CD8-positive, alpha-beta T cell (primary cell): ENCODE measurements at regions of chr3 and their contacts with region 1.

Region 1: GRCh38 chr3:83835037-83835436 is 1123.8 kb upstream of the CADM2 start:
- DNase-seq: no peak
- ATAC-seq: no peak
- H3K4me3 ChIP-seq: no peak overlapping the region
- H3K4me3 Mint-ChIP-seq: no peak overlapping the region
- H3K27ac ChIP-seq: no peak overlapping the region
- H3K27ac Mint-ChIP-seq: no peak overlapping the region
- H3K4me1 ChIP-seq: no peaks in the 10 kb centered on the region
- H3K4me1 Mint-ChIP-seq: no peaks in the 10 kb centered on the region
- H3K27me3 ChIP-seq: no peaks in the 10 kb centered on the region
- H3K27me3 Mint-ChIP-seq: no peaks in the 10 kb centered on the region
- CTCF ChIP-seq: no peak

Region 2: GRCh38 chr3:83076041-83076440 is 759.0 kb before region 1 on chr3:
- CTCF ChIA-PET with region 1: no interaction called
- POLR2A ChIA-PET with region 1: no interaction called
- intact Hi-C with region 1: loop called in 1 of 2 experiments (anchors 5 kb)
- DNase-seq: no peak
- ATAC-seq: no peak
- H3K4me3 ChIP-seq: no peak overlapping the region
- H3K4me3 Mint-ChIP-seq: no peak overlapping the region
- H3K27ac ChIP-seq: no peak overlapping the region
- H3K27ac Mint-ChIP-seq: no peak overlapping the region
- H3K4me1 ChIP-seq: no peaks in the 10 kb centered on the region
- H3K4me1 Mint-ChIP-seq: no peaks in the 10 kb centered on the region
- H3K27me3 ChIP-seq: no peaks in the 10 kb centered on the region
- H3K27me3 Mint-ChIP-seq: no peaks in the 10 kb centered on the region
- CTCF ChIP-seq: no peak

Region 3: GRCh38 chr3:83354205-83354604 is 480.8 kb before region 1 on chr3:
- CTCF ChIA-PET with region 1: no interaction called
- POLR2A ChIA-PET with region 1: no interaction called
- intact Hi-C with region 1: no loop called
- DNase-seq: no peak
- ATAC-seq: no peak
- H3K4me3 ChIP-seq: no peak overlapping the region
- H3K4me3 Mint-ChIP-seq: no peak overlapping the region
- H3K27ac ChIP-seq: no peak overlapping the region
- H3K27ac Mint-ChIP-seq: no peak overlapping the region
- H3K4me1 ChIP-seq: no peaks in the 10 kb centered on the region
- H3K4me1 Mint-ChIP-seq: no peaks in the 10 kb centered on the region
- H3K27me3 ChIP-seq: no peaks in the 10 kb centered on the region
- H3K27me3 Mint-ChIP-seq: no peaks in the 10 kb centered on the region
- CTCF ChIP-seq: no peak

Region 4: DNA sequence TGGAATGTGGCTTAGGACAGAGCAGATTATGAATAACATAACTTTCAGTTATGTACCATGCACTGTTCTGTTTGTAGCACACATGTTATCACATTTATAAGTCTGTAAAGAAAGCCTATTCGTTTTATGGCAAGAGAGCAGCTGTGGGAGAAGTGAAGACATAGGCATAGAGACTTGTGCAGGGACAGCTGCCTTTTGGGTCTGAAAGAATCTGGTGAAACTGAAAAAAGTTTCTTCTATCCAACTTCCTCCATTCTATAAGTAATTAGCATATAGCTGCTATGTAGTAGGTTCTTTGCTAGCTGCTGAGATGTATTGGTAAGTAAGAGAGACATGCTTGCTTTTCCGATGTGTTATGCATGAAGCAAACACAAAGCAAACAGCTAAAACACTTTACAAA is 28.3 kb after region 1 on chr3:
- CTCF ChIA-PET with region 1: no interaction called
- POLR2A ChIA-PET with region 1: no interaction called
- intact Hi-C with region 1: loop called in 1 of 2 experiments (anchors 2 kb)
- DNase-seq: no peak
- ATAC-seq: no peak
- H3K4me3 ChIP-seq: no peak overlapping the region
- H3K4me3 Mint-ChIP-seq: no peak overlapping the region
- H3K27ac ChIP-seq: no peak overlapping the region
- H3K27ac Mint-ChIP-seq: no peak overlapping the region
- H3K4me1 ChIP-seq: no peaks in the 10 kb centered on the region
- H3K4me1 Mint-ChIP-seq: no peaks in the 10 kb centered on the region
- H3K27me3 ChIP-seq: no peaks in the 10 kb centered on the region
- H3K27me3 Mint-ChIP-seq: no peaks in the 10 kb centered on the region
- CTCF ChIP-seq: no peak